Activated CD8-positive, alpha-beta T cell treated with anti-CD3 and anti-CD28 coated beads, Interleukin-2, amount 10 ng/mL, durations not matched to agents 7 days and 5 days (primary cell): ENCODE measurements at regions of chr17 and their contacts with region 1.

Region 1: GRCh38 chr17:48259694-48260291 is 152.2 kb downstream of the SNX11 start:
- DNase-seq: no peak
- ATAC-seq: no peak
- H3K4me3 Mint-ChIP-seq: no peak overlapping the region
- H3K27ac Mint-ChIP-seq: no peak overlapping the region
- H3K4me1 Mint-ChIP-seq: peaks cover 9% of the 10 kb centered on the region
- H3K27me3 Mint-ChIP-seq: no peaks in the 10 kb centered on the region

Region 2: DNA sequence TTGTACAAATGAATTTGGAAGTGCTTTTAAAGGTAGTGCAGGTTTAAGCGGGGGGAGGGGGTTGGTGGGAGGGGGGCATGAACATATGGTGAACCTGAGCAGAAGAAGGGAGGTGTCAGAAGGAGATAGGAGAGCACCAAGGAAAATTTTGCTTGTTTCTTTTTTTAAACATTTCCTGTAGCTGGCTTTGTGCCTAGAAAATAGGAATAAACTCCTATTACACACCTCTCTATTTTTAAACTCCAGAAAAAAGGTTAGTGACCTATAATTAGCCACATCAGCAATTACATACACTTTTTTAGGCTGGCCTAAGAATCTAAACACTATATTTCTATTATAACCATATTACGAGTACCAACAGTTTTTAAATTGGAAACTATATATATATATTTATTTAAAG is 11.1 kb after region 1 on chr17:
- CTCF ChIA-PET with region 1: interaction called, 20 read pairs
- POLR2A ChIA-PET with region 1: interaction called, 3 read pairs
- DNase-seq: no peak
- ATAC-seq: no peak
- H3K4me3 Mint-ChIP-seq: no peak overlapping the region
- H3K27ac Mint-ChIP-seq: no peak overlapping the region
- H3K4me1 Mint-ChIP-seq: peaks cover 8% of the 10 kb centered on the region
- H3K27me3 Mint-ChIP-seq: no peaks in the 10 kb centered on the region

Region 3: GRCh38 chr17:48295362-48296288 is 35.8 kb after region 1 on chr17:
- CTCF ChIA-PET with region 1: interaction called, 16 read pairs
- POLR2A ChIA-PET with region 1: interaction called, 3 read pairs
- DNase-seq: no peak
- ATAC-seq: peak; percentile 68
- H3K4me3 Mint-ChIP-seq: peak overlapping the region; percentile 75
- H3K27ac Mint-ChIP-seq: peak overlapping the region; percentile 90
- H3K4me1 Mint-ChIP-seq: peaks cover 34% of the 10 kb centered on the region
- H3K27me3 Mint-ChIP-seq: no peaks in the 10 kb centered on the region

Region 4: GRCh38 chr17:48586355-48587258 is 326.8 kb after region 1 on chr17:
- CTCF ChIA-PET with region 1: interaction called, 60 read pairs
- POLR2A ChIA-PET with region 1: no interaction called
- DNase-seq: peak; percentile 49
- ATAC-seq: peak; percentile 27
- H3K4me3 Mint-ChIP-seq: peak overlapping the region; percentile 86
- H3K27ac Mint-ChIP-seq: no peak overlapping the region
- H3K4me1 Mint-ChIP-seq: peaks cover 51% of the 10 kb centered on the region
- H3K27me3 Mint-ChIP-seq: peaks cover 77% of the 10 kb centered on the region